ENCODE measurements at regions of chr14 and their contacts with region 1.

Region 1: DNA sequence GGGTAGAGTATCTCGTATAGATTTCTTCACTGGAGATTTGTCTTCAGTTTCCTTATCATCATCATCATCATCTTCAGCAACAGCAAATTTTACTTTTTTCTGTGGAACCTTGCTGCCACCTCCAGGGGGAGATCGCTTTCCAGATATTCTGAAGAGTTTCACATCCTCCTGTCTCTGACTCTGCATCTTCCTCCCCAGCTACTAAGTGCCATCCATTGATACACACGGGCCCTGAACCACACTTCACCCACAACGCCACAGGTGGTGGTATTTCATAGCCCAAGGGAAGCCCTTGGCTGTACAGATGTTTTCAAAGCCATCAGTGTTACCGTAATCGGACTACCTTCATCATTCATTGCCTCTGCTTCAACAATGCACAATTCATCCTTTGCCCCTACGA is 82.2 kb downstream of the PPP2R5C start:
- DNase-seq: peak; percentile 93
- H3K4me3 ChIP-seq: peak overlapping the region; percentile 38
- H3K27ac ChIP-seq: peak overlapping the region; percentile 63
- H3K4me1 ChIP-seq: peaks cover 89% of the 10 kb centered on the region
- CTCF ChIP-seq: peak; percentile 97

Region 2: GRCh38 chr14:101774006-101774795 is 69.5 kb before region 1 on chr14:
- CTCF ChIA-PET with region 1: interaction called, 7 read pairs
- POLR2A ChIA-PET with region 1: interaction called, 7 read pairs
- intact Hi-C with region 1: loop called (anchors 1 kb)
- DNase-seq: peak; percentile 95
- H3K4me3 ChIP-seq: peak overlapping the region; percentile 49
- H3K27ac ChIP-seq: peak overlapping the region; percentile 96
- H3K4me1 ChIP-seq: peaks cover 85% of the 10 kb centered on the region
- CTCF ChIP-seq: no peak

Region 3: DNA sequence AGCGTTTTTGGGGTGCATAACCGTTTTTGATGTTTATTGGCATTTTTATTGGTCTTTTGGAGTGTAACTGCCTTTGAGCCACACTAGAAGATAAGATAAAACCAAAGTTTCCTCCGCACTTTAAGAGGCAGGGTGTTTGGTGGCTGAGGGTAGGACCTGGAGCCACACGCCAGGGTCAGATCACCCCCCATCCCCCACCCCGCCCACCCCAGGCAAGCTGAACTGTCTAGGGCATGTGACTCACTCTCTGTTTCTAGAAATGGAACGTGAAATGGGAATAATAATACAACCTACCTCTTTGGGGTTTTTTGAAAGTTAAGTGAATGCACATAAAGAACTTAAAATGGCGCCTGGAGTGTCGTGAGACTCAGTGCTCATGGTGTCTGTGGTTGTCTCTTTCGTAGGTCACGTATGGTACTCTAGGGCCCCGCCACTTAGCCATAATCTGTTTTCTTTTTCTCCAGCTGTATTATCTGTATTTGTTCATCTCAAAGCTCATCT is 26.1 kb before region 1 on chr14:
- CTCF ChIA-PET with region 1: interaction called, 13 read pairs
- POLR2A ChIA-PET with region 1: interaction called, 7 read pairs
- intact Hi-C with region 1: loop called (anchors 2 kb)
- DNase-seq: no peak
- H3K4me3 ChIP-seq: peak overlapping the region; percentile 33
- H3K27ac ChIP-seq: peak overlapping the region; percentile 22
- H3K4me1 ChIP-seq: peaks cover 95% of the 10 kb centered on the region
- CTCF ChIP-seq: no peak

Region 4: DNA sequence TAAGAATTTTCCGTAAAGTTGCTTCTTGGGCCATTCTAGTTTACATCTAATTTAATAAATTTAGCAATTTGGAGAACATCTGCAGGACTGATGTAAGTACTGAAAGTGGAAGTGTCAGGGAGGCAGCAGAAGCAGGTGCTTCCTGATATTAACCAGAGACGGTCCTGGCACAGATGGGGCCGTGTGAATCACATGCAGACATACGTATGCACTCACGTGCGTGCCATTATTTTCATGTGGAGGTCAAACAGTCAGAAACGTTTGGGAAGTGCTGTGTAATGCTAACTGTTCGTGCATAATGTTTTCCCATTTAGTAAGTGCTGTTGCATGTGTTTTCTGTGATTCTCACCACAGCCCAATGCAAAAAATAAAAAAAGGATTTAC is 32.9 kb after region 1 on chr14:
- CTCF ChIA-PET with region 1: interaction called, 6 read pairs
- POLR2A ChIA-PET with region 1: interaction called, 7 read pairs
- intact Hi-C with region 1: loop called (anchors 1 kb)
- DNase-seq: peak; percentile 97
- H3K4me3 ChIP-seq: peak overlapping the region; percentile 63
- H3K27ac ChIP-seq: peak overlapping the region; percentile 98
- H3K4me1 ChIP-seq: peaks cover 74% of the 10 kb centered on the region
- CTCF ChIP-seq: no peak

Region 5: GRCh38 chr14:101947906-101948665 is 104.4 kb after region 1 on chr14:
- CTCF ChIA-PET with region 1: no interaction called
- POLR2A ChIA-PET with region 1: no interaction called
- intact Hi-C with region 1: loop called (anchors 2 kb)
- DNase-seq: peak; percentile 100
- H3K4me3 ChIP-seq: peak overlapping the region; percentile 82
- H3K27ac ChIP-seq: peak overlapping the region; percentile 49
- H3K4me1 ChIP-seq: peaks cover 9% of the 10 kb centered on the region
- CTCF ChIP-seq: no peak

Measured in OCI-LY7 (cell line).